Activated T-helper 2 cell treated with anti-CD3 and anti-CD28 coated beads, Interferon-gamma antibody, Interleukin-2, Interleukin-4, amounts not matched to agents 10 μg/mL and 5 μg/mL and 100 μg/mL, durations not matched to agents 14 hours and 24 hours and 36 hours (primary cell): ENCODE measurements at regions of chr20 and their contacts with region 1.

Region 1: DNA sequence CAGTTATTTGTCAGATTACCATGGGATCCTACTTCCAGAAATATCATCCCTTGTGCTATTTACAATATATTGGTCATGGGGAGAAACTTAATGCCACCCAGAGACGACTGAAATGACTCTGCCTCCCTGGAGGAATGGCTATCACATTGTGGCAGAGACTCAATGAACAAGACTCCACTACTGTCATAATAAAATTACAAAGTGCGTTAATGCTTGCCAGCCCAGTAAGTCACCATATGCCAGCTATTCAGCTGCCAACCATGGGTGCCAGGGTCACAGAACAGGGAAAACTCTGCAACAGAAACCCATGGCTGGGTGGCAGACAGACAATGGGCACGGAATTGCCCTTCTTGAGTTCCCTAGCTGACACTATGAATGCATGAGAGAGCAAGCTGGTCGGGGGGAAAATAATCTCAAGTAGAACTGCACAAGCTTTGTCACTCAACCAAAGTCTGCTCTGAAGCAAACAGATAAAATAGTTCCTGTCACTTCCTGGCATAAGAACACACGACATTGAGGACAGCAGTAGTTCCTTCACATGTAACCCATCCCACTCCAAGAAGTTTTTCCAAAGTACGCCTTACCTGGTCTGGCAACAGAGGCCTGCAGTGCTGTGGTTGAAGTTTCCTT is 32.1 kb downstream of the TP53INP2 start:
- DNase-seq: no peak
- H3K4me3 Mint-ChIP-seq: no peak overlapping the region
- H3K27ac Mint-ChIP-seq: no peak overlapping the region
- H3K4me1 Mint-ChIP-seq: no peaks in the 10 kb centered on the region
- H3K27me3 Mint-ChIP-seq: no peaks in the 10 kb centered on the region

Region 2: DNA sequence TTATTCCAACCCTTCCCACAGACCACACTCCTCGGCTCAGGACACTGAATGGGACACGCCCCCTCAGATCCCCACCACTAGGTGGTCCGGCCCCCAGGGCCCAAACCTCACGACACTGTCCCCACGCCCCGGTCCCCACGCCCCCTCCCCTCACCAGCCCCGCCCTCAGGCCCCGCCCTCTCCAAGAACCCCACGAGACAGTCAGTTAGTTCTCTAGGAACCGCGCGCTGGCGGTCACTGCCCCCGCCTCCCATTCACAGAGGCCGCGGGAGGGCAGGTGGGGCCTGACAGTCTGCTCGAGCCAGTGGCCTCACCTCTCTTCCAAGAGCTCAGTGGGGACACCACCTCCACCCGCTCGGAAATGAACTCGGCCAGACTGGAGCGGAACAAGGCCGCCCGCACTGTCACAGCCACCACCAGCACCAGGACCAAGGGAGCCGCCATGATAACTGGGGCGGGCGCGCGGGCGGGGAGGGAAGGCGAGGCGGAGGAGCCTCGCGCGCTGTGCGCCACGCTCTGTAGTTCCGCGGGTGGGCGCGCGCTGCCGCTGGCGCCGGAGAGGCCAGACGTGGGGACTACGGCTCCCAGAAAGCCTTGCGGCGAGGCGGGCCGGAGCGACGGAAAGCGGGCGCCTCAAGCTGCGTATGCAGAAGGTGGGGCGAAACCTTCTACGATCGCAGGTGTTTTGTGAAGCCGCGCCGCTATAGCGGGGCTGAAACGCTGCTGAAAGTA is 59.4 kb before region 1 on chr20 and contains the start of gene PIGU:
- intact Hi-C with region 1: loop called (anchors 10 kb)
- DNase-seq: peak; percentile 96
- H3K4me3 Mint-ChIP-seq: peak within 1 kb of the TSS; percentile 93
- H3K27ac Mint-ChIP-seq: peak within 1 kb of the TSS; percentile 96
- H3K4me1 Mint-ChIP-seq: peaks cover 17% of the 10 kb centered on the region
- H3K27me3 Mint-ChIP-seq: no peaks in the 10 kb centered on the region
- total RNA-seq, gene PIGU: 24.9 and 25.7 TPM in 2 replicates